Activated T-helper 1 cell treated with anti-CD3 and anti-CD28 coated beads, Interleukin-12 subunit alpha, Interleukin-12 subunit beta, Interleukin-2, Interleukin-4 antibody, amounts not matched to agents 30 ng/mL and 10 ng/mL and 1 ng/mL, durations not matched to agents 14 hours and 24 hours and 36 hours (primary cell): ENCODE measurements at regions of chr15 and their contacts with region 1.

Region 1: DNA sequence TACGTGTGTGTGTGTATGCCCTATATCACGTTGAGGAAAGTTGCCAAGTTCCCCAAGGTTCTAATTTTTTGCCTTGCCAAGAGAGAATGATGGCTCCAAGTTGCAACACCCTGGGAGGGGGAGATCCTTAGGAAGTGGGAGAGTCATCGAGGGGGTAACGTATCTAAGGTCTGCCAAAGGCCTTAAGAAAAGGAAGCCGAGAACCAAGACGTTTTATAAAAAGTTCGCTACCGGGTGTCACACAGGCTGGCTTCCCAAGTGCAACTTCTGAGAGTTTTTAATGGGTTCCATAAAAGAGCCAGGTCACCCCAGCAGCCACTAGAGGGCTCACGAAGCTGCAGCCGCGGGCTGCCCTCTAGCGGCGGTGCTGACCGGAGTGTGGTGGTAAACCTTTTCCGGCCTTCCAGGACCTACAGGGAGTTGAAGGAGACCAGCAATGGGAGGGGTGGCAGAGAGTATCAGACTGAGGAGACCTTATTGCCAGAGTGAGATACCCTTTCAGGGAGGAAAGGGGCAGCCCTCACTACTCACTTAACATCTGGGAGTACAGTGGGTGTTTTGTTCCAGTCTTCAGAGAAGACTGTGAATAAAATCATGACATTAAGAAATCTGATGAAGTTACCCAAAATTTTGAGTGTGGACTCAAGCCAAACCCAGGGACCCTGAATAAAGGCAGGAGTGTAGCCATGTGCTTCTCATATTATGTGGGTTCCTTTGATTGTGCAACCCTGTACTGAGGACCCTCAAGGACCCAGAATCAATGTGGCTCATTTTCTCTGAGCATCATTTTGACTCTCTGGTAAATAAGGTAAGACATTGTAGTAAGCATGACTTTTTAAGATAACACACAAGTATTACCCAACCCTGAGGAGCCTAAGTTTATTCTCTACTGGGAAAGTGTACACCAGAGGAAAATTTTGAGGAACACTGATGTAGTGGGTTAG is 2.5 kb upstream of the RFX7 start:
- DNase-seq: peak; percentile 85
- H3K4me3 Mint-ChIP-seq: peak overlapping the region; percentile 82
- H3K27ac Mint-ChIP-seq: peak overlapping the region; percentile 82
- H3K4me1 Mint-ChIP-seq: peaks cover 36% of the 10 kb centered on the region
- H3K27me3 Mint-ChIP-seq: peaks cover under 1% of the 10 kb centered on the region

Region 2: GRCh38 chr15:55407949-55408791 is 838.0 kb before region 1 on chr15 and contains the starts of genes CCPG1 and PIERCE2:
- intact Hi-C with region 1: loop called (anchors 5 kb)
- DNase-seq: peak; percentile 89
- H3K4me3 Mint-ChIP-seq: peak within 1 kb of the TSS; percentile 98
- H3K27ac Mint-ChIP-seq: peak within 1 kb of the TSS; percentile 95
- H3K4me1 Mint-ChIP-seq: peaks cover 26% of the 10 kb centered on the region
- H3K27me3 Mint-ChIP-seq: no peaks in the 10 kb centered on the region
- total RNA-seq, gene CCPG1: 15.0 TPM in 2 replicates
- total RNA-seq, gene PIERCE2: not detected in 2 replicates

Region 3: DNA sequence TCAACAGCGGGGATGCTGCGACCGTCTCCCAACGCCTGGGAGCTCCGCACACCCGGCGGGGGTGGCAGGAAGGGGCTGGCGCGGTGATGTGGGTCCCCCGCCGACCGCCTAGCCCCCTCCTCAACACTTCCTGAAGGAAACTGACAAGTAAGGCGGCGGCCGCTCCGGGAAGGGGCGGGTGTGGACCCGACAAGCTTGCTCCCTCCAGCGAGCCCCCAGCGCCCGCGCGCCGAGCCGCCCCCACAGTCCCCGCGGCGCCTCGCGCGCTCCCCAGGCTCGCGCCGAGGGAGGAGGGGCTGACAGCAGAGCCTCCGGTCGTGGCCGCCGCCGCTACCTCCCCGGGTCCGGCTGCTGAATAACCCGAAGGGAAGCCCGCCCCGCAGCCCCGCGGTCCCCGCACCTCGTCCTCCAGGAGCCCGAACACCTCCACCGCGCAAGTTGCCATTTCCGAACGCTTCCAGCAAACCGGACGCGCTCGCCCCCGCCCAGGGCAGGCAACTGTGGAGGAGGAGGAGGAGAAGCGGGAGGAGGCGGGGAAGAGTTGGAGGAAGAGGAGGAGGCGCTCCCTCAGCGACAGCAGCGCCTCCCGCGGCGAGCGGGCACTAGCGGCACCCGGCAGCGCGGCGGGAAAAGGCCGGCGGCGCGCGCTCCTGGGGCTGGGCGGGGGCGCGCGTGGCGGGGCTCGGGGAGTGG is 252.9 kb before region 1 on chr15 and contains the start of gene NEDD4:
- intact Hi-C with region 1: loop called (anchors 1 kb)
- DNase-seq: peak; percentile 68
- H3K4me3 Mint-ChIP-seq: peak within 1 kb of the TSS; percentile 87
- H3K27ac Mint-ChIP-seq: peak within 1 kb of the TSS; percentile 57
- H3K4me1 Mint-ChIP-seq: peaks cover 23% of the 10 kb centered on the region
- H3K27me3 Mint-ChIP-seq: peaks cover 30% of the 10 kb centered on the region
- total RNA-seq, gene NEDD4: 10.4 and 12.6 TPM in 2 replicates

Region 4: GRCh38 chr15:56365075-56365711 is 119.0 kb after region 1 on chr15 and contains the start of gene TEX9:
- intact Hi-C with region 1: loop called (anchors 1 kb)
- DNase-seq: peak; percentile 68
- H3K4me3 Mint-ChIP-seq: peak within 1 kb of the TSS; percentile 84
- H3K27ac Mint-ChIP-seq: no peak within 1 kb of the TSS
- H3K4me1 Mint-ChIP-seq: peaks cover 18% of the 10 kb centered on the region
- H3K27me3 Mint-ChIP-seq: peaks cover 37% of the 10 kb centered on the region
- total RNA-seq, gene TEX9: 0.67 and 0.78 TPM in 2 replicates

Region 5: DNA sequence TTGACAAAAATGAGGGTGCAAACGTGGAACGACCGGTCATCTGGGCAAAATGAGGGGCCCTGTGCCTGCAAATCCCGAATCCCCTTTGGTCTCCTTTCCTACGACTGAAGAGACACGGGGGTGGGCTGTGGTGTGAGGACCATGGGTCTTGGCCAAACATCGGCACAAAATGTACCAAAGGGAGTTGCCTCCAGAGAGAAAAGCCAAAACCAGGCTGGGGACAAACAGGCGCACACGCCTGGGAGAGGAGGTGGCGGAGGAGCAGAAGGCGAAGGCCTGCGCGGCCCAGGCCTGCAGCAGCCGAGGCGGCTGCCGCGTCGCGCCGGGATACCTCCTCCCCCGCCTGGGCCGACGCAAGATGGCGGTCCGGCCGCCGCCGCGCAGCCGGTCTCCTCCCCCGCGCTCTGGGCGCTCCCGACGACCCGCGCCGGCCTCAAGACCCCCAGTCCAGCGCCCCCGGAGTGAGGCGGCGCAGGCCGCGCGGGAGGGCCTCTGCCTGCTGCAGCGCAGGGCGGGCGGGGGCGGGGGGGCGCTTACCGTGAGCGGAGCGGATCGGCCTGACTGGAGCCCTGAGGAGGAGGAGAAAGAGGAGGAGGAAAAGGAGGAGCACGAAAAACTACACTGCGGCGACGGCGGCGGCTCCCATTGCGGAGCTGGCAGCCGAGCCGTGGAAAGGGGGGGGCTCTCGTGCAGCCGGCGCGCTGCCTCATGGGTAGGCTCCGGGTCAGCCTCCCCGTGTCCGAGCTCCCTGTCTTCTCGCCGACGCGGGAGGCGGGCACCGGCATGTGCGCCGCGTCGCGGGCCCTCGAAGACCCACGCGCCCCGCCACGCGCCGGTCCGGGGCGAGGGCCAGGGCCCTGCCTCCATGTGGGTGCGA is 487.0 kb after region 1 on chr15 and contains the start of gene ZNF280D:
- intact Hi-C with region 1: loop called (anchors 5 kb)
- DNase-seq: peak; percentile 77
- H3K4me3 Mint-ChIP-seq: peak within 1 kb of the TSS; percentile 95
- H3K27ac Mint-ChIP-seq: peak within 1 kb of the TSS; percentile 99
- H3K4me1 Mint-ChIP-seq: peaks cover 47% of the 10 kb centered on the region
- H3K27me3 Mint-ChIP-seq: peaks cover 3% of the 10 kb centered on the region
- total RNA-seq, gene ZNF280D: 29.9 and 30.5 TPM in 2 replicates

Region 6: DNA sequence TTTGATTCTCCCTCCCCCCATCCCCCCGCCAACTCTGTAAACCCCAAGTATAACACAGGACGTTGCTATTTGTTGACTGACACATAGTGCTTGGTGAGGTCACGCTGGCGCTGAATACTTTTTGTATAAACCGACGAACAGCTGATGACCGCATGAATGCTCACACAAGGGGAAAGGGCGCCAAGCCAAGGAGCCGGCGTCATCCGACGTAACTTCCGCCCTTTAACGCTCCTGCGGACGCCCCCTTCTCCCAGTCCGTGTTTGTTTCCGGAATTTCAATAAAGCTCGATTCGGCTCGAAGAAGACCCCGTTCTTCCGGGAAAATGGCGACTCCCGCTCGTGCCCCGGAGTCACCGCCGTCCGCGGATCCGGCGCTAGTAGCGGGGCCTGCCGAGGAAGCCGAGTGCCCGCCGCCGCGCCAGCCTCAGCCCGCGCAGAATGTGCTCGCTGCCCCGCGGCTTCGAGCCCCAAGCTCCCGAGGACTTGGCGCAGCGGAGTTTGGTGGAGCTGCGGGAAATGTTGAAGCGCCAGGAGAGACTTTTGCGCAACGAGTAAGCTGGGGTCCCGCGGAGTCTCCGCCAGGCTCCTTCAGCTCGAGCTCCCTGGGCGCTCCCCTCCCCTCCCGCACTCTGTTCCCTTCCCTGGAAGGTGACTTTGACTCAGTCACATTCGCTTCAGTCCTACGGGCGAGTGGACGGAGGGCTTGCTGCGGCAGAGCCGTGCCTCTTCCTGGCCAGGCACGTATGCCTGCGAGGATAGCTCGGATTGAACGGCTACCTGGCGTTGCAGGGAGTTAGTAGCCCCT is 1460.5 kb after region 1 on chr15 and contains the start of gene POLR2M:
- intact Hi-C with region 1: loop called (anchors 5 kb)
- DNase-seq: peak; percentile 82
- H3K4me3 Mint-ChIP-seq: peak within 1 kb of the TSS; percentile 82
- H3K27ac Mint-ChIP-seq: peak within 1 kb of the TSS; percentile 84
- H3K4me1 Mint-ChIP-seq: peaks cover 70% of the 10 kb centered on the region
- H3K27me3 Mint-ChIP-seq: no peaks in the 10 kb centered on the region
- total RNA-seq, gene POLR2M: 60.3 and 62.4 TPM in 2 replicates